GM12878 (cell line): ENCODE measurements at regions of chr21 and their contacts with region 1.

Region 1: GRCh38 chr21:45140346-45140940 is 66.1 kb downstream of the ADARB1 start:
- DNase-seq: no peak
- ATAC-seq: peak; percentile 98
- H3K4me3 ChIP-seq: no peak overlapping the region
- H3K27ac ChIP-seq: no peak overlapping the region
- H3K4me1 ChIP-seq: no peaks in the 10 kb centered on the region
- H3K27me3 ChIP-seq: peaks cover 0 to 9% of the 10 kb centered on the region in 2 experiments; a peak in 1 of 4 replicates
- CTCF ChIP-seq: peak; percentile 86 to 98 (median 90); a peak in 5 of 6 replicates
- EP300 ChIP-seq: no peak
- POLR2A ChIP-seq: no peak
- RAD21 ChIP-seq: peak; percentile 90

Region 2: GRCh38 chr21:44958471-44959191 is 181.8 kb before region 1 on chr21:
- CTCF ChIA-PET with region 1: interaction called, 37 read pairs
- POLR2A ChIA-PET with region 1: no interaction called
- RAD21 ChIA-PET with region 1: interaction called, 104 read pairs
- SMC1A ChIA-PET with region 1: interaction called, 16 read pairs
- in situ Hi-C with region 1: no loop called
- intact Hi-C with region 1: no loop called
- DNase-seq: no peak
- ATAC-seq: no peak
- H3K4me3 ChIP-seq: no peak overlapping the region
- H3K27ac ChIP-seq: no peak overlapping the region
- H3K4me1 ChIP-seq: no peaks in the 10 kb centered on the region
- H3K27me3 ChIP-seq: no peaks in the 10 kb centered on the region
- CTCF ChIP-seq: no peak
- EP300 ChIP-seq: no peak
- POLR2A ChIP-seq: no peak
- RAD21 ChIP-seq: no peak

Region 3: GRCh38 chr21:45039317-45040156 is 100.9 kb before region 1 on chr21:
- CTCF ChIA-PET with region 1: no interaction called
- POLR2A ChIA-PET with region 1: no interaction called
- RAD21 ChIA-PET with region 1: no interaction called
- SMC1A ChIA-PET with region 1: no interaction called
- in situ Hi-C with region 1: no loop called
- intact Hi-C with region 1: no loop called
- DNase-seq: no peak
- ATAC-seq: no peak
- H3K4me3 ChIP-seq: no peak overlapping the region
- H3K27ac ChIP-seq: no peak overlapping the region
- H3K4me1 ChIP-seq: no peaks in the 10 kb centered on the region
- H3K27me3 ChIP-seq: no peaks in the 10 kb centered on the region; a peak in 2 of 4 replicates
- CTCF ChIP-seq: no peak
- EP300 ChIP-seq: no peak
- POLR2A ChIP-seq: no peak
- RAD21 ChIP-seq: no peak

Region 4: GRCh38 chr21:45091550-45092322 is 48.7 kb before region 1 on chr21:
- CTCF ChIA-PET with region 1: interaction called, 173 read pairs
- POLR2A ChIA-PET with region 1: no interaction called
- RAD21 ChIA-PET with region 1: interaction called, 7 read pairs
- SMC1A ChIA-PET with region 1: interaction called, 31 read pairs
- in situ Hi-C with region 1: no loop called
- intact Hi-C with region 1: no loop called
- DNase-seq: no peak
- ATAC-seq: no peak; the same call in 2 of the 3 replicates
- H3K4me3 ChIP-seq: no peak overlapping the region
- H3K27ac ChIP-seq: no peak overlapping the region
- H3K4me1 ChIP-seq: no peaks in the 10 kb centered on the region; the same call in 1 of the 2 replicates
- H3K27me3 ChIP-seq: peaks cover 0 to 7% of the 10 kb centered on the region in 2 experiments; a peak in 2 of 4 replicates
- CTCF ChIP-seq: no peak
- EP300 ChIP-seq: no peak
- POLR2A ChIP-seq: no peak
- RAD21 ChIP-seq: no peak

Region 5: GRCh38 chr21:45130324-45130774 is 10.1 kb before region 1 on chr21:
- CTCF ChIA-PET with region 1: interaction called, 236 read pairs
- POLR2A ChIA-PET with region 1: no interaction called
- RAD21 ChIA-PET with region 1: interaction called, 33 read pairs
- SMC1A ChIA-PET with region 1: interaction called, 39 read pairs
- in situ Hi-C with region 1: no loop called
- intact Hi-C with region 1: no loop called
- DNase-seq: no peak
- ATAC-seq: peak; percentile 85
- H3K4me3 ChIP-seq: no peak overlapping the region
- H3K27ac ChIP-seq: no peak overlapping the region
- H3K4me1 ChIP-seq: peaks cover 3% of the 10 kb centered on the region
- H3K27me3 ChIP-seq: peaks cover 0 to 2% of the 10 kb centered on the region in 2 experiments; a peak in 2 of 4 replicates
- CTCF ChIP-seq: no peak
- EP300 ChIP-seq: no peak
- POLR2A ChIP-seq: no peak
- RAD21 ChIP-seq: no peak

Region 6: GRCh38 chr21:45222001-45222400 is 81.6 kb after region 1 on chr21:
- CTCF ChIA-PET with region 1: no interaction called
- POLR2A ChIA-PET with region 1: no interaction called
- RAD21 ChIA-PET with region 1: no interaction called
- SMC1A ChIA-PET with region 1: no interaction called
- in situ Hi-C with region 1: no loop called
- intact Hi-C with region 1: no loop called
- DNase-seq: no peak
- ATAC-seq: no peak
- H3K4me3 ChIP-seq: no peak overlapping the region
- H3K27ac ChIP-seq: no peak overlapping the region
- H3K4me1 ChIP-seq: no peaks in the 10 kb centered on the region
- H3K27me3 ChIP-seq: no peaks in the 10 kb centered on the region
- CTCF ChIP-seq: no peak
- EP300 ChIP-seq: no peak
- POLR2A ChIP-seq: no peak
- RAD21 ChIP-seq: no peak

Region 7: GRCh38 chr21:45236481-45236880 is 96.0 kb after region 1 on chr21:
- CTCF ChIA-PET with region 1: interaction called, 7 read pairs
- POLR2A ChIA-PET with region 1: interaction called, 3 read pairs
- RAD21 ChIA-PET with region 1: interaction called, 3 read pairs
- SMC1A ChIA-PET with region 1: interaction called, 5 read pairs
- in situ Hi-C with region 1: no loop called
- intact Hi-C with region 1: loop called (anchors 5 kb)
- DNase-seq: no peak
- ATAC-seq: peak; percentile 81
- H3K4me3 ChIP-seq: no peak overlapping the region
- H3K27ac ChIP-seq: no peak overlapping the region
- H3K4me1 ChIP-seq: no peaks in the 10 kb centered on the region
- H3K27me3 ChIP-seq: no peaks in the 10 kb centered on the region
- CTCF ChIP-seq: peak; percentile 19 to 38 (median 32); a peak in 4 of 6 replicates
- EP300 ChIP-seq: no peak
- POLR2A ChIP-seq: no peak
- RAD21 ChIP-seq: peak; percentile 31; the same call in 1 of the 2 replicates

Region 8: DNA sequence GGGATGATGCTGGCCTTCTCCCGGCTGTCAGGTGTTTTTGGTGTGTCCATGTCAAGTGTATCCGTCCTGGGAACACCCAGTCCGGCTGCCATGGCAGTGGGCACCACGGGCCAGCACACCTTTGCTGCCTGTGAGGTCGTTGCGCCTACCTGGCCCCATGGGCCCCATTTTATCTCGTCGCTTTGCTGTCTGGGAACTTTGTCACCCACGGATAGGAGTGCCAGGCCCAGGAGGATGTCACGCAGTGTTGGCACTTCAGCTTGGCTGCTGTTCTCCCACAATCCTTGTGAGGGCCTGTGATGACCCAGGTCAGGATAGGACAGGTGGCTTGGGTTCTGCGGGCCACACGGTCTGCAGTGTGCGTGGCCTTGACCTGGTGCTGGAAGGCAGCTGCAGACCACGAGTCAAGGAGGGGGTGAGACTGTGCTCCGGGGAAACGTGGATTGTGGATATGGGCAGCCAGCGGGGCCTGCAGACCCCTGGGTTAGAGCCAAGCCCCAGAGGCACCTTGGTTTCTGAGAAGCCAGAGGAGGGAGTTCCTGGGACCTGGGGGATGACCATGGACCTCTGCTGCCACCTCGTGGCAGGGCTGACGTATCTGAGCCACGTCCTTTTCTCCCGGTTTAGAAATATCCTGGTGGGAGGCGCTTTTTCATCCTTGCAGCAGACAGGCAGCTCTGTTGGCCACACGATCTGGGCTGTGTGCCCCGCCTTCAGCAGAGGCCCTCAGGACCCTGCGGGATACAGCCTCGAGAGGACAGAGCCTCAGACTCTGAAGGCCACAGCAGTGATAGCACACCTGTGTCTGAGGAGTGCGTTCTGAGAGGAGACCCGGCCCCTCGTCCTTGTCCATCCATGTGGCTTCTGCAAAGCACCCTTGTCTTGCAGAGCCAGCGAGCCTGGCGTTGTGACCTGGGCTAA is 680.0 kb after region 1 on chr21:
- CTCF ChIA-PET with region 1: interaction called, 8 read pairs
- POLR2A ChIA-PET with region 1: no interaction called
- RAD21 ChIA-PET with region 1: no interaction called
- SMC1A ChIA-PET with region 1: interaction called, 3 read pairs
- in situ Hi-C with region 1: loop called (anchors 5 kb)
- intact Hi-C with region 1: loop called (anchors 2 kb)
- DNase-seq: no peak
- ATAC-seq: peak; percentile 88
- H3K4me3 ChIP-seq: no peak overlapping the region
- H3K27ac ChIP-seq: no peak overlapping the region
- H3K4me1 ChIP-seq: peaks cover 4% of the 10 kb centered on the region
- H3K27me3 ChIP-seq: no peaks in the 10 kb centered on the region
- CTCF ChIP-seq: peak; percentile 83 to 94 (median 90); a peak in 5 of 6 replicates
- EP300 ChIP-seq: no peak
- POLR2A ChIP-seq: no peak
- RAD21 ChIP-seq: peak; percentile 94